Activated B cell treated with CpG ODN at 0.5 μM for 24 hours (primary cell): ENCODE measurements at regions of chr6 and their contacts with region 1.

Region 1: DNA sequence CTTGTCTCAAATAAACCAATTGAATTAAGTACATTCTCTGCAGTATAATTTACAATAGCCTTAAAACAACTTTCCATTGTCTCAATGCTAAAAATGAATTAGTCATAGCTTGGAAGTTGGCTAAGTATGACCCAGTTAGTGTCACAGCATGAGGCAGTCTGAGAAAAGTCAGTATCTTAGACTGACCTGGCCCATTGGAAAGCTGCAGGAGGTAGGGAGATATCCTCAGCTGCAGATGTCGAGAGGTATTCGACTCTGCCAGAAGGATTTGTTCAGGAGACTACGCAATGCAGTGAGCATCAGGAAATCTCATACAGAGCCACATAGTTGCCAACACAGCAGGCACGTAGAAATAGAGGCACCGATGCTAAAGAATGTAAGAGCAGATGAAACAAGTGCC is 350.9 kb upstream of the NRSN1 start:
- DNase-seq: no peak
- ATAC-seq: no peak
- H3K4me3 Mint-ChIP-seq: no peak overlapping the region
- H3K27ac Mint-ChIP-seq: no peak overlapping the region
- H3K4me1 Mint-ChIP-seq: no peaks in the 10 kb centered on the region
- H3K27me3 Mint-ChIP-seq: no peaks in the 10 kb centered on the region
- CTCF ChIP-seq: no peak

Region 2: DNA sequence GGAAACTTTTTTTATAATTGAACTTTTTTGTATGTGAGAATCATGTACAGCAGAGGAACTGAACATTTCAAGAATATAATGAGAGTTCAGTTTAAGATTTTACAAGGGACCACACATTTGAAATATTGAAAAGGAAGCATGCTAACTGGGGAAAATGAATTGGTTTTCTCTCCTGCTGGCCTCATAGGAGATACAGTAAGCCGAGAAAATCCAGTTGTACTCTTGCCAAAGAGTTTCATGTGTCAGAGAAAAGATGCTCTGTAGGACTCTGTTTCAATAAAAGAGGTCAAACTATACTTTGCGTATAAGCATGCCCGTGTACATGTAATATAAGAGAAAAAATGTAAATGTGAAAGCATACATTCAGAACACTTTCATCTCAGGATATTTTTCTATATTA is 42.6 kb before region 1 on chr6:
- CTCF ChIA-PET with region 1: no interaction called
- POLR2A ChIA-PET with region 1: no interaction called
- intact Hi-C with region 1: loop called (anchors 1 kb)
- DNase-seq: no peak
- ATAC-seq: no peak
- H3K4me3 Mint-ChIP-seq: no peak overlapping the region
- H3K27ac Mint-ChIP-seq: no peak overlapping the region
- H3K4me1 Mint-ChIP-seq: no peaks in the 10 kb centered on the region
- H3K27me3 Mint-ChIP-seq: no peaks in the 10 kb centered on the region
- CTCF ChIP-seq: no peak

Region 3: DNA sequence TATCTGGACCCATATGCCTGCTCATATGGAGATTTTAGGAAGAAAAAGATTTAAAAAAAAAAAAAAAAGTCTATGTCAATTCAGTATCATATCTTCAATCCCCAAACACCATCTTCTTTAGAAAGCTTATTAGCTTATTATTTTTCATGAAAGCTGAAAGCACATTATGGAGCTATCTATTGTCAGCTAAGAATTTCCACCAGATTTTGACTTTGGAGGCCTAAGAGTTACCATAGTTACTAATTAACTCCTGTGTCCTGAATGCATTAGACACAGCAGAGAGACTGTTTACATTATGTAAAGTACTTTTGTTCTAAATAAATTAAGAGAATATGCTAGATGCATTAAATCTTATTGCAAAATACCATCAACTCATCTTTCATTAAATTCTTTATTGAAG is 95.4 kb after region 1 on chr6:
- CTCF ChIA-PET with region 1: no interaction called
- POLR2A ChIA-PET with region 1: no interaction called
- intact Hi-C with region 1: no loop called
- DNase-seq: no peak
- ATAC-seq: no peak
- H3K4me3 Mint-ChIP-seq: no peak overlapping the region
- H3K27ac Mint-ChIP-seq: no peak overlapping the region
- H3K4me1 Mint-ChIP-seq: no peaks in the 10 kb centered on the region
- H3K27me3 Mint-ChIP-seq: no peaks in the 10 kb centered on the region
- CTCF ChIP-seq: no peak